ENCODE measurements at regions of chr1 and their contacts with region 1.

Region 1: GRCh38 chr1:240149484-240150094 is 57.9 kb downstream of the FMN2 start:
- DNase-seq: no peak
- ATAC-seq: no peak
- H3K4me3 Mint-ChIP-seq: no peak overlapping the region
- H3K27ac Mint-ChIP-seq: no peak overlapping the region
- H3K4me1 Mint-ChIP-seq: no peaks in the 10 kb centered on the region
- H3K27me3 Mint-ChIP-seq: no peaks in the 10 kb centered on the region
- CTCF ChIP-seq: peak; percentile 56

Region 2: DNA sequence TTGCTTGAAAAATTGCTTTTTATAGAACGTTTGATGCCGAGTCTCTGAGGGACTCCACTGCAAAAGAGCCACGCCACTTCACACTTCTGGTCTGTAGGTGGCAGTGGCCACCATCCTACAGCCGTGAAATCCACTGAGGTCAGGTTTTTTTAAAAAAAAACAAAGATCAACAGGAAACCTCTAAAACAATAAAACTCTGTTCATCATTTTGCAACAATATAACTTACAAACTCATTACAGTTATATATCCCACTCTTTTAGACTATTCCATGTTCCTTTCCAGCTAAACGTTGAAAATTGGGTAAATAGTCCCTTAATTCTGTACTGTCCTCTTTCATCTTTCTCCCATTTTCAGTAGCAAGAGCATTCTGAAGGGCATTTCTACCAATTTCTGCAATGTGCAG is 122.5 kb before region 1 on chr1:
- CTCF ChIA-PET with region 1: no interaction called
- POLR2A ChIA-PET with region 1: no interaction called
- intact Hi-C with region 1: loop called (anchors 2 kb)
- DNase-seq: no peak
- ATAC-seq: no peak
- H3K4me3 Mint-ChIP-seq: no peak overlapping the region
- H3K27ac Mint-ChIP-seq: no peak overlapping the region
- H3K4me1 Mint-ChIP-seq: no peaks in the 10 kb centered on the region
- H3K27me3 Mint-ChIP-seq: peaks cover 2% of the 10 kb centered on the region
- CTCF ChIP-seq: no peak

Region 3: GRCh38 chr1:240794046-240794843 is 644.7 kb after region 1 on chr1:
- CTCF ChIA-PET with region 1: no interaction called
- POLR2A ChIA-PET with region 1: no interaction called
- intact Hi-C with region 1: no loop called
- DNase-seq: no peak
- ATAC-seq: no peak
- H3K4me3 Mint-ChIP-seq: no peak overlapping the region
- H3K27ac Mint-ChIP-seq: no peak overlapping the region
- H3K4me1 Mint-ChIP-seq: no peaks in the 10 kb centered on the region
- H3K27me3 Mint-ChIP-seq: no peaks in the 10 kb centered on the region
- CTCF ChIP-seq: no peak